ENCODE measurements at regions of chr19 and their contacts with region 1.

Region 1: DNA sequence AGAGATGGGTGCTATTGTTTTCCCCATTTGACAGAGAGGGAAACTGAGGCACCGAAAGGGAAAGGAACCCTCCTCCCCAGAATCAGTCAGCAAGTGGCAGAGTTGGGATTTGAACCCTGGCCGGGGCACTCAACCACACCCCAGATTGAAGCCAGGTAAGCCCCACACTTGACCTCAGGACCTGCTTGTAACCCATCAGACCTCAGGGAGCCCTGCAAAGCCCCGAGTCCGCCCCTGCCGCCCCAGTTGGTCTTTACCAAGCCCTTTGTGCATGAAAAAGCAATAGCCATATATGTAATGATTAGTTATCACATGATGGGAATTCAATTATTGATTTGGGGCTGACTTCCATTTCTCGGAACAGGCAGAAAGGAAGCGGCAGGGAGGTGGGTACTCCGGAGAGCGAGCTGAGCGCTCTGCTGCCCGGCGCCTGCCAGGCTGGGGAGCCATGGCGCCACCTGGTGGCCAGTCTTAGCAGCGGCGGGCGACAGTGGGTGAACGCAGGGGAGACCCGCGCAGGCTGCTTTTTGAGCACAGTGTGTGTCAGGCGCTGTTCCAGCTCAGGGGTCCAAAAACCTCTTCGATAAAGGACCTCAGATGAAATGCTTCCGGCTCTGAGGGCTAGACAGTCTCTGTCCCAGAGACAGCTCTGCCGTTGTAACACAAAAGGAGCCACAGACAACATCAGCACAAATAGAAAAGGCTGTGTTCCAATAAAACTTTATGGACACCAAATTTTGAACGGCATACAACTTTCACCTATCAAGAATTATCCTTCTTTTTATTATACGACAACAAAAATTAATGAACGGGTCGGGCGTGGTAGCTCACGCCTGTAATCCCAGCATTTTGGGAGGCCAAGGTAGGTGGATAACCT is 82.9 kb upstream of the CACNA1A start:
- DNase-seq: peak; percentile 69 to 77
- ATAC-seq: peak in 2 of 4 donors; percentile 46 to 56
- H3K4me3 ChIP-seq: no peak overlapping the region
- H3K27ac ChIP-seq: no peak overlapping the region
- H3K4me1 ChIP-seq: no peaks in the 10 kb centered on the region
- H3K27me3 ChIP-seq: peaks cover 0 to 23% (median 1%) of the 10 kb centered on the region in 3 donors
- CTCF ChIP-seq: peak; percentile 86

Region 2: GRCh38 chr19:12974301-12975220 is 614.6 kb before region 1 on chr19:
- intact Hi-C with region 1: loop called in 1 of 2 experiments (anchors 5 kb)
- DNase-seq: no peak
- ATAC-seq: no peak
- H3K4me3 ChIP-seq: no peak overlapping the region
- H3K27ac ChIP-seq: no peak overlapping the region
- H3K4me1 ChIP-seq: no peaks in the 10 kb centered on the region
- H3K27me3 ChIP-seq: no peaks in the 10 kb centered on the region
- CTCF ChIP-seq: no peak

Region 3: DNA sequence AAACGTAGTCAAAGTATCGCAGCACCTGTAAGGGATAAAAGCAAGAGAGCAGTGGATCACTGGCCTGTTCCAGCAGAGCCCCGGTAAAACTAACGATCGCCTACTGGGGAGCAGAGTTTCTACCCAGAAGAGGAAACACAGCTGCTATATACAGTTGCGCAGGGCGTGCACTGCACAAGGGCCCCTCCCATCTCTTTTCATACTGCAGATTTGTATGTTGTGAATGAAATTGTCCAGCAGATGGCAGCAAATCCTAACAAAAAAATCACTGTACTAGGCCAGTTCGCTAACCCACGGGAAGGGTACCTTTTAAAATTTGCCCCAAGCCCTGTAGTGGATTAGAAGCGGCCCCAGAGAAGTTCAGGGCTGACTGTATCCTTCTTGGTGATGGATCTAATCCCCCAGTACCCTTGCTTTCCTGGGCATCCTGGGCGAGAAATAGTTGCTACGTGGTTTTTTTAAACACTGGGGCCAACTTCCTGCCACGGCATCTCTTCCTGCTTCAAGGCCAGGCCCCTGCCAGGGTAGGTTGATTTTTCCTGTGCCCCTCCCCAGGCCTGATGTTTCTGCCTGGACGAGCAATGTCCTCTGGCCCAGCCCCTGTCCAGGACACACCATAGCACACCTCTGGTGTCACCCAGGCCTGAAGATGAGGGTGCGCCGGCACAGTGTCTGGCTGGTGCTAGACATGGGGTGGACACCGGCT is 311.9 kb before region 1 on chr19:
- intact Hi-C with region 1: loop called (anchors 2 to 5 kb)
- DNase-seq: peak; percentile 28 to 59
- ATAC-seq: peak; percentile 86 to 97 (median 88)
- H3K4me3 ChIP-seq: no peak overlapping the region
- H3K27ac ChIP-seq: no peak overlapping the region
- H3K4me1 ChIP-seq: no peaks in the 10 kb centered on the region
- H3K27me3 ChIP-seq: peaks cover 0 to 11% (median 0%) of the 10 kb centered on the region in 3 donors
- CTCF ChIP-seq: peak; percentile 67